ENCODE measurements at regions of chr2 and their contacts with region 1.

Region 1: GRCh38 chr2:1550658-1551316 is 137.5 kb downstream of the TPO start:
- DNase-seq: peak; percentile 89
- H3K4me3 Mint-ChIP-seq: no peak overlapping the region
- H3K27ac Mint-ChIP-seq: no peak overlapping the region
- H3K4me1 Mint-ChIP-seq: peaks cover 7% of the 10 kb centered on the region
- H3K27me3 Mint-ChIP-seq: peaks cover 7% of the 10 kb centered on the region

Region 2: GRCh38 chr2:714005-714741 is 836.6 kb before region 1 on chr2:
- intact Hi-C with region 1: loop called (anchors 1 kb)
- DNase-seq: peak; percentile 80
- H3K4me3 Mint-ChIP-seq: no peak overlapping the region
- H3K27ac Mint-ChIP-seq: no peak overlapping the region
- H3K4me1 Mint-ChIP-seq: no peaks in the 10 kb centered on the region
- H3K27me3 Mint-ChIP-seq: peaks cover 15% of the 10 kb centered on the region

Region 3: DNA sequence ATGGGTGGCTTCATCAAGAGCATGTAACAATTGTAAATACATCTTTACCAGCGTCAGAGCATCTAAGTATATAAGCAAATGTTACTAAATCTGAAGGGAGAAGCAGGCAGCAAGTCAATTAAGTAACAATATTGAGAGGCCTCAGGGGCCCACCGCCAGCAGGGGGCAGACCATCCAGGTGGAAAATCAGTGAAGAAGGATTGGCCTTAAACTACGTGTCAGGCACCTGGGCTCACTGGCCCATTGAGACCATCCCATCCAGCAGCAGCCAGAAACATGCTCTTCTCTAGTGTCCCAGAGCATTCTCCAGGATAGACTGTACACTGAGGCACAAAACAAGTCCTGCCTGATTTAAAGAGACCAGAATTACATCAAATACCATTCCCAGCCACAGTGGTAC is 696.3 kb before region 1 on chr2:
- intact Hi-C with region 1: loop called (anchors 2 kb)
- DNase-seq: peak; percentile 77
- H3K4me3 Mint-ChIP-seq: no peak overlapping the region
- H3K27ac Mint-ChIP-seq: no peak overlapping the region
- H3K4me1 Mint-ChIP-seq: peaks cover 13% of the 10 kb centered on the region
- H3K27me3 Mint-ChIP-seq: no peaks in the 10 kb centered on the region

Region 4: GRCh38 chr2:2075875-2076529 is 525.2 kb after region 1 on chr2:
- intact Hi-C with region 1: no loop called
- DNase-seq: peak; percentile 7
- H3K4me3 Mint-ChIP-seq: no peak overlapping the region
- H3K27ac Mint-ChIP-seq: no peak overlapping the region
- H3K4me1 Mint-ChIP-seq: no peaks in the 10 kb centered on the region
- H3K27me3 Mint-ChIP-seq: no peaks in the 10 kb centered on the region

Measured in activated CD4-positive, alpha-beta T cell treated with anti-CD3 and anti-CD28 coated beads, Interleukin-2, amount 10 ng/mL, durations not matched to agents 24 days and 14 days (primary cell).